ENCODE measurements at regions of chr3 and their contacts with region 1.

Region 1: GRCh38 chr3:126245811-126246727 is 65.7 kb upstream of the ALDH1L1 start:
- DNase-seq: peak in 4 of 5 donors; percentile 40 to 59 (median 48)
- ATAC-seq: peak; percentile 75 to 90 (median 88)
- H3K4me3 ChIP-seq: no peak overlapping the region
- H3K27ac ChIP-seq: no peak overlapping the region
- H3K4me1 ChIP-seq: peaks cover 0 to 6% (median 0%) of the 10 kb centered on the region in 12 donors
- H3K27me3 ChIP-seq: peaks cover 0 to 3% (median 0%) of the 10 kb centered on the region in 9 donors
- CTCF ChIP-seq: peak; percentile 37 to 64 (median 54)
- POLR2A ChIP-seq: no peak

Region 2: GRCh38 chr3:126389112-126389793 is 143.2 kb after region 1 on chr3:
- intact Hi-C with region 1: loop called in 4 of 10 experiments (anchors 1 to 5 kb)
- DNase-seq: peak; percentile 83 to 96 (median 93)
- ATAC-seq: peak; percentile 88 to 98 (median 96)
- H3K4me3 ChIP-seq: peak overlapping the region in 11 of 12 donors; percentile 4 to 63 (median 53)
- H3K27ac ChIP-seq: peak overlapping the region; percentile 69 to 88 (median 82)
- H3K4me1 ChIP-seq: peaks cover 0 to 10% (median 5%) of the 10 kb centered on the region in 12 donors
- H3K27me3 ChIP-seq: peaks cover 0 to 12% (median 0%) of the 10 kb centered on the region in 9 donors
- CTCF ChIP-seq: peak; percentile 78 to 100 (median 98)
- POLR2A ChIP-seq: peak in 1 of 2 donors; percentile 55

Region 3: GRCh38 chr3:126415661-126416591 is 169.9 kb after region 1 on chr3:
- intact Hi-C with region 1: no loop called
- DNase-seq: no peak
- ATAC-seq: no peak
- H3K4me3 ChIP-seq: no peak overlapping the region
- H3K27ac ChIP-seq: no peak overlapping the region
- H3K4me1 ChIP-seq: peaks cover 0 to 6% (median 0%) of the 10 kb centered on the region in 12 donors
- H3K27me3 ChIP-seq: peaks cover 10 to 58% (median 25%) of the 10 kb centered on the region in 9 donors
- CTCF ChIP-seq: no peak
- POLR2A ChIP-seq: no peak

Measured in heart left ventricle (tissue), 16 donors.